ENCODE measurements at regions of chr11 and their contacts with region 1.

Region 1: DNA sequence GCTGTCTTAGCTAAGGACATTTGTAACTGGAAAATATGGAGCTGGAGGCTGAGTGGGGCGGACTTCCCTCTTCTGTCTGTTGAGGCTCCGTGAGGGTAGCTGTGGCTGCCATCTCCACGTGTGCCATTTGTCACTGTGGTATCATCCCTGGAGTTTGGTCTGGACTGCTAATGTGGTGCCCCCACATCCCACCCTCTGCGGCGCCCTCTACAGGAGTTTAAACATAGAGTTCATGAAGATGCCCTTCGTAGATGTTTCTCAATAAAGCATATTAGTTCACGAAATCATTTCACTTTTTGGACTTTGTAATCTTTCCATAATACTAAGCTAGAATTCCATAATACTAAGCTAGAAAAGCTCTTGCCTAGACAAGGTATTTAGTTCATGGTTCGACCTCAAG is 52.4 kb downstream of the TECTA start:
- DNase-seq: no peak
- ATAC-seq: no peak
- H3K4me3 ChIP-seq: no peak overlapping the region
- H3K27ac ChIP-seq: no peak overlapping the region
- H3K4me1 ChIP-seq: no peaks in the 10 kb centered on the region
- H3K27me3 ChIP-seq: peaks cover 40% of the 10 kb centered on the region
- CTCF ChIP-seq: peak; percentile 29

Region 2: GRCh38 chr11:120151536-120151935 is 1001.9 kb before region 1 on chr11:
- CTCF ChIA-PET with region 1: no interaction called
- POLR2A ChIA-PET with region 1: no interaction called
- in situ Hi-C with region 1: no loop called
- intact Hi-C with region 1: loop called (anchors 10 kb)
- DNase-seq: no peak
- ATAC-seq: no peak
- H3K4me3 ChIP-seq: no peak overlapping the region
- H3K27ac ChIP-seq: no peak overlapping the region
- H3K4me1 ChIP-seq: no peaks in the 10 kb centered on the region
- H3K27me3 ChIP-seq: peaks cover 18% of the 10 kb centered on the region
- CTCF ChIP-seq: no peak

Region 3: GRCh38 chr11:121265586-121265985 is 112.1 kb after region 1 on chr11:
- CTCF ChIA-PET with region 1: no interaction called
- POLR2A ChIA-PET with region 1: no interaction called
- in situ Hi-C with region 1: no loop called
- intact Hi-C with region 1: no loop called
- DNase-seq: no peak
- ATAC-seq: 0 out of 2 replicates have a peak, but pooled peaks have one; percentile 42
- H3K4me3 ChIP-seq: no peak overlapping the region
- H3K27ac ChIP-seq: no peak overlapping the region
- H3K4me1 ChIP-seq: no peaks in the 10 kb centered on the region
- H3K27me3 ChIP-seq: peaks cover 38% of the 10 kb centered on the region
- CTCF ChIP-seq: no peak

Measured in Panc1 (cell line).